Activated naive CD4-positive, alpha-beta T cell treated with anti-CD3 and anti-CD28 coated beads for 36 hours (primary cell): ENCODE measurements at regions of chr1 and their contacts with region 1.

Region 1: GRCh38 chr1:98965394-98965793 is 39.3 kb downstream of the PLPPR5 start:
- DNase-seq: no peak
- H3K4me3 Mint-ChIP-seq: no peak overlapping the region
- H3K27ac Mint-ChIP-seq: peak overlapping the region; percentile 65
- H3K4me1 Mint-ChIP-seq: peaks cover 9% of the 10 kb centered on the region
- H3K27me3 Mint-ChIP-seq: peaks cover 2% of the 10 kb centered on the region

Region 2: GRCh38 chr1:98839840-98840239 is 125.6 kb before region 1 on chr1:
- CTCF ChIA-PET with region 1: no interaction called
- intact Hi-C with region 1: no loop called
- DNase-seq: no peak
- H3K4me3 Mint-ChIP-seq: no peak overlapping the region
- H3K27ac Mint-ChIP-seq: no peak overlapping the region
- H3K4me1 Mint-ChIP-seq: peaks cover 23% of the 10 kb centered on the region
- H3K27me3 Mint-ChIP-seq: no peaks in the 10 kb centered on the region

Region 3: DNA sequence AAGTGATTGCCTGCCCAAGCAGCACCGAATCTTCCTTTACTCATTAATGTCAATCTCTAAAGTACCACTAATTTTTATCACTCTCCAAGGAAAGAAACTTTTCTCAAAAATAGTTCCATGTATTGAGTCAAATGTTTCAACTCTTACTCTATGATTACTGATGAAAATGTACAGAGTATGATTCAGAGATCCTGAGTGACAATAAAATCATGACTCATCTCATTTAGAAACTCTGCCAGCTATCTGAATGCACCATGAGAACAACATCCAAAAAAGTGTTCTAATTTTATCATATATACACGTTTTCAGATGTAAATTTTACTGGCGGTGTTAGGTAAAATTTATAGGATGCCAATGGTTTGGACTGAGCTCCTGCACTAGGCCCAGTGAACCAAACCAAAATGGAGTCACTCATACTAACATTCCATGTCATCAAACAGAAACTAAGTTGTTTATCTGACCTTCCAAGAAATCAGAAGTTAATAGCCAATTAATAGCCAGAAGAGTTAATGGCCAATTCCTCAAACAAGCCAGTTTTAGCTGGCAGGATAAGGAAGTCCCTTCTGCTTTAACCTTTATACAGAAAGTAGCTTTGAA is 16.6 kb after region 1 on chr1:
- CTCF ChIA-PET with region 1: no interaction called
- intact Hi-C with region 1: loop called (anchors 1 kb)
- DNase-seq: no peak
- H3K4me3 Mint-ChIP-seq: no peak overlapping the region
- H3K27ac Mint-ChIP-seq: no peak overlapping the region
- H3K4me1 Mint-ChIP-seq: peaks cover 8% of the 10 kb centered on the region
- H3K27me3 Mint-ChIP-seq: no peaks in the 10 kb centered on the region